Activated CD4-positive, alpha-beta T cell treated with anti-CD3 and anti-CD28 coated beads, Interleukin-2, amount 10 ng/mL, durations not matched to agents 7 days and 5 days (primary cell): ENCODE measurements at regions of chr2 and their contacts with region 1.

Region 1: GRCh38 chr2:75579186-75579585 is 18.4 kb upstream of the EVA1A start:
- DNase-seq: no peak
- H3K4me3 Mint-ChIP-seq: no peak overlapping the region
- H3K27ac Mint-ChIP-seq: no peak overlapping the region
- H3K4me1 Mint-ChIP-seq: no peaks in the 10 kb centered on the region
- H3K27me3 Mint-ChIP-seq: peaks cover 15% of the 10 kb centered on the region

Region 2: DNA sequence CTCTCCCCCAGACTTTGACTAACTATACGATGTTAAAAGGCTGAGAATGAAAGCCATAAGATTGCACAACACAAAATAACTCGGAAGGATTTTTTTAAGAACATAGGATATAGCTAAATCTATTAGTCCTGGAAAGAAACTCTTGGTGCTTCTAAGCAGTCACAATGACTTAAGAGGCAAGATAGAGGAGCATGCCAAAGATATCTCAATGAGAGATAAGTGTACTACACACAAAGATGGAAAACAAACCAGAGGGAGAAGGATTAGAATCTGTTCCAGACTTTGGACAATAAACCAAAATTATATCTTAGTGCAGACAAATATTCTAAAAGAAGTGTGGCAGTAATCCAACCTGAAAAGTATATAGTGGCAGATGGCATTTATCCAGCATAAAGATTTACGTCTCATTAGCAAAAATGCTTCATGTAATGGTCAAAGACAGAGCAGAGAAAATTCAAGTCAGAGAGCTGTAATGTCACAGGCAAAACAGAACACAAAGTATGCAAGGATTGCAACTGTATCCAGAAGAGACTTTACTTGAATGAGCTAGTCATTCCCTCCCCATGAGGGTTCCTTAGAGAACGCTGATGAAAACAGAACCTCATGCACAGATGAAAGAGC is 10.3 kb after region 1 on chr2:
- CTCF ChIA-PET with region 1: no interaction called
- POLR2A ChIA-PET with region 1: interaction called, 11 read pairs
- DNase-seq: no peak
- H3K4me3 Mint-ChIP-seq: no peak overlapping the region
- H3K27ac Mint-ChIP-seq: no peak overlapping the region
- H3K4me1 Mint-ChIP-seq: no peaks in the 10 kb centered on the region
- H3K27me3 Mint-ChIP-seq: peaks cover 15% of the 10 kb centered on the region